Naive thymus-derived CD8-positive, alpha-beta T cell (primary cell): ENCODE measurements at regions of chr3 and their contacts with region 1.

Region 1: DNA sequence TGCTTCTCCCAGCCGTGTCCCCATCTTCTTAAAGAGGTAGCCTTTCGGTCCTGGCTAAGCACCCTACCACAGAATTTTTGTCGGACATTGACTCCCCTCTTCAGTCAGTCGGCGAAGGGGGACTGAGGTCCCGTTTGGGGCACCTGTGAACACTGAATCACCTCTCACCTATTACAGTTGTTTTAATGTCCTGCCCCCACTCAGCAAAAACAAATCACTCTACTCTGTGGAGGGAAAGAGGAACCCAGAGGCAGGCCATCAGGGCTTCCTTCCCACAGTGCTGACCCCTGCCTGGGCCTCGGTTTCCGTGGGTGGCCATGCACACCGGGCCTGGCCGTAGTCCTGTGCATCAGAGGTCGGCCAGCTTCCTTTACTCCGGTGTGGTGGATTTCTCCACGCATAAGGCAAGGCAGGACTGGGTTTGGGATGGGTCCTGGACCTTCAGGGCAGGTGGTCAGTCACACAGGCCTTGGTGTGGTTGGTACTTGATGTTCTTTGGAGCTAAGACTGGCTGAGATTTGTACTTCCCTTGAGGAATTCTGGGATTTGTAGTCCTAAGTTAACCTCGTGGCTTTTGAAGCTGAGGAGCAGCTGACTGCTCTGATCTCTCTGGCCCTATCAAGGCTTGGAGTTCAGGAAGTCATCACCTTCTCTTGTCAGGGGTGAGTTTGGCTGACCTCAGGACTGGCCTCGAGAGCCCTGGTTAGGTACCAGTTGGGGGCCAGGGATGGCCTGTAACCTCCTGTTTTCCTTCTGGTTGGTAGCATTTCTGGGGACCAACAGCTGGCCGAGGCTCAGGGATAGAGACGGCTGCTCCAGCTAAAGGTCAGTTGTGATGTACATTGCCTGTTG is 627 bp upstream of the FAM131A start:
- DNase-seq: no peak
- ATAC-seq: no peak
- H3K4me3 Mint-ChIP-seq: peak overlapping the region; percentile 80 to 96 (median 92)
- H3K27ac Mint-ChIP-seq: peak overlapping the region; percentile 76 to 99 (median 94)
- H3K4me1 Mint-ChIP-seq: peaks cover 21 to 44% (median 42%) of the 10 kb centered on the region in 4 donors
- H3K27me3 Mint-ChIP-seq: no peaks in the 10 kb centered on the region

Region 2: DNA sequence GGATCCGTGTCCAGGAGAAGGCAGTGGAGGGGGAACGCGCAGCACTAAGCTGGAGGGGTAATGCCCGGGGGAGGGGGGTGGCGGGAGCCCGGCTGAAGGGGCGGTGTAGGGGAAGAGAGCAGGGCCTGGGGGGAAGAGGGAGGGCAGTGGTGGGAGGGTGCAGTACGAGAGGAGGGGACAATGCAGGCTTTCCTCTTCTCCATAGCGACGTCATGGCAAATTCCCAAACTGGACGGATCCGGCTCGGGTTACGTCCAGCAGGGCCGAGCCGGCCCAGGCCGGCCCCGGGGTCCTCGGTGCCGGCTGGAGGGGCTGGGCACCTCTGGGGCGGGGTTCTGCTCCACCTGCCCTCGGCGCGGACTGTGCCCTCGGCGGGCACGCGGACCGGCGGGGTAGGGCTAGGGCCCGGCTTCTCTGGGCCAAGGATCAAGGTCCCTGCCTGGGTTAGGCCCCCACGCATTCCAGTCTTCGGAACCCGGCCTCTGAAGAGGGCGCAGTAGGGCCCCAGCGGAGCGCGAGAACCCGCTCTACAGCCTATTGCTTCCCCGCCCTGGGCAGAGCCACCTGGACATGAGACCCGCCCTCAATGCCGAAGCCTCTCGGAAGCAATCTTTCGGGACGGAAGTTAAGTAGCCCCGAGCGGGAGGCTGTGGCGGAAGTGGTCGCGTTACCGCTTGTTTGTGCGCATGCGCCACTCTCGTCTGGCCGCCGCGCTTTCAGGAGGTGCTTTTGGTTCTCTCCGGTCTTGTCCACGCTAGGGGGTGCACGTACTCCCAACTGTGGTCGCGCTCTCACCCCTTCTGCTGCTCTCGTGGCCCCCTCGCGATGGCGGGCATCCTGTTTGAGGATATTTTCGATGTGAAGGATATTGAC is 26.1 kb after region 1 on chr3:
- POLR2A ChIA-PET with region 1: interaction called, 15 read pairs
- DNase-seq: peak; percentile 79 to 96 (median 93)
- ATAC-seq: peak; percentile 80 to 84
- H3K4me3 Mint-ChIP-seq: peak overlapping the region; percentile 91 to 99 (median 98)
- H3K27ac Mint-ChIP-seq: peak overlapping the region; percentile 91 to 98 (median 96)
- H3K4me1 Mint-ChIP-seq: peaks cover 21 to 41% (median 36%) of the 10 kb centered on the region in 4 donors
- H3K27me3 Mint-ChIP-seq: peaks cover 0 to 3% (median 0%) of the 10 kb centered on the region in 5 donors